Breast epithelium (tissue), 4 donors: ENCODE measurements at regions of chr3 and their contacts with region 1.

Region 1: DNA sequence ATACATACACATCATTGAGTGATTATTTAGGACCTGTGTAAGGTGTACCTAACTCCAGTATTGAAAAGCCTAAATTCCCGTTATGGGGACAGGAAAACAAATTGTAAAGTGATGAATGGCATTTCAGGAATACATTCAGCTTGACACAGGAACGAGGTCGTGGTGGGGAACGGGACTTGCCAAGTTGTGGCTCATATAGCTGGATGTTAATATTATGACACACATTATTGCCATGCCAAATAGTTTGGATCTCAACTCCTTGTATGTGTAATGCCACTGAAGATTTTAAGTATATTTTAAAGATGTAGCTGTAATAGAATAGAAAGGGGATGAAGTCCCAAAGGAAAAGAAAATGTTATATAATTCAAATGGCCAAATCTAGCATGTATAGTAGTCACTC is 227.2 kb upstream of the GOLIM4 start:
- DNase-seq: no peak
- H3K4me3 ChIP-seq: no peak overlapping the region
- H3K27ac ChIP-seq: no peak overlapping the region
- H3K4me1 ChIP-seq: no peaks in the 10 kb centered on the region
- H3K27me3 ChIP-seq: no peaks in the 10 kb centered on the region
- CTCF ChIP-seq: no peak
- POLR2A ChIP-seq: no peak

Region 2: DNA sequence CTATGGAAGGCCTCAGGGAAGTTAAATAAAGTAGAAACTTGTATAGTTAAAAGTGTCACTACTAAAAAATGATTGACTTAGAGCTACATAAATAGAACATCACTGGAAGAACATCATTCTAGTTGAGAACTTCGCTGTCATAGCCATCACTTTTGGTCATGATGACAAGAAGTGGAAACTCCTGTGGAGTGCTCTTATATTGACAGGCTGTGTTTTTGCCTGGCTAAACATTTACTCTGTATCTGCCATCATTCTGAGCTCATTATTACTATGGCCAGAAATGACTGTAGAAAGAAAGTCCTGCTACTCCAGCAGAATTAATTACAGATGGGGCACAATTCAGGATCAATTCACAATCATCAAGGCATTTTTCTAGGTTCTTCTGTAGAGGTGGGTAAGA is 62.1 kb before region 1 on chr3:
- intact Hi-C with region 1: loop called (anchors 2 kb)
- DNase-seq: no peak
- H3K4me3 ChIP-seq: no peak overlapping the region
- H3K27ac ChIP-seq: no peak overlapping the region
- H3K4me1 ChIP-seq: no peaks in the 10 kb centered on the region
- H3K27me3 ChIP-seq: no peaks in the 10 kb centered on the region
- CTCF ChIP-seq: no peak
- POLR2A ChIP-seq: no peak

Region 3: DNA sequence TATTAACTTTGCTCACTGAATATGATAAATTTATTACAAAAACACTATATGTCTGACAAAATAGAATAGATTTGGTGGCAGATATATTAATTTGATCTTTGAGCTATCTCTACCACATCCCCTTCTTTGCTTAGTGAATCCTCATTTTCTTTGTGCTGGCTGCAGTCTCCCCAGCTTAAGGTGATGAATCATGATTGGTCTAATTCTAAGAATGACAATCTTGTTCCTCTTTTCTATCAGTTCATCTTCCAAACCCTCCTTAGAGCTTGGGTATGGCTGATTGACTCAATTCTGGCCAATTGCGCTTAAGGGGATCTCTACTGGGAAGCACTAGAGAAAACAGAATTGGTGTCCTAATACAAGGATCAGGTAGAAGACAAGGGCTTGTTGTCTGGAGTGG is 82.3 kb after region 1 on chr3:
- intact Hi-C with region 1: no loop called
- DNase-seq: no peak
- H3K4me3 ChIP-seq: no peak overlapping the region
- H3K27ac ChIP-seq: no peak overlapping the region
- H3K4me1 ChIP-seq: no peaks in the 10 kb centered on the region
- H3K27me3 ChIP-seq: no peaks in the 10 kb centered on the region
- CTCF ChIP-seq: no peak
- POLR2A ChIP-seq: no peak

Region 4: GRCh38 chr3:168909260-168909659 is 586.3 kb after region 1 on chr3:
- intact Hi-C with region 1: no loop called
- DNase-seq: no peak
- H3K4me3 ChIP-seq: no peak overlapping the region
- H3K27ac ChIP-seq: no peak overlapping the region
- H3K4me1 ChIP-seq: no peaks in the 10 kb centered on the region
- H3K27me3 ChIP-seq: no peaks in the 10 kb centered on the region
- CTCF ChIP-seq: no peak
- POLR2A ChIP-seq: no peak